ENCODE measurements at regions of chr21 and their contacts with region 1.

Region 1: DNA sequence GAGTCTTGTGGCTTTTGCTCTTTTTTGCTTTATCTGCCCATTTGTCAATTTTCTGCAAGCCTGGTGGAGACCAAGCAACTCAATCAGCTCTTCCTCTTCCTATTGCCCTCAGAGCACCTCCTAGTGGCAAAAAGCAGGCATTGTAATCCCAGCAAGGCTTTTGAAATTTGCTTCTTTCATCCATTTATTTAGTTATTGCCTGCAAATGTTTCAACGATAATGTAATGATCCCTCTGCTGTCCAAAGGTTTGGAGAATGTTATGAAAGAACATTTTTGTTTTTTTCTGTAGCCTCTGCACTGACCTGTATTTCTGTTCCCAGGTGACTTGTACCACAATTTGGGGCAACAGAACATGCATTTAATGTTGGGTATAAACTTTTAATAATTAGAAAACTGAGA is 127.8 kb downstream of the GABPA start:
- DNase-seq: peak; percentile 69
- H3K4me3 Mint-ChIP-seq: no peak overlapping the region
- H3K27ac Mint-ChIP-seq: no peak overlapping the region
- H3K4me1 Mint-ChIP-seq: peaks cover 2% of the 10 kb centered on the region
- H3K27me3 Mint-ChIP-seq: peaks cover 18% of the 10 kb centered on the region

Region 2: GRCh38 chr21:25788677-25789076 is 73.9 kb before region 1 on chr21:
- intact Hi-C with region 1: loop called (anchors 5 kb)
- DNase-seq: no peak
- H3K4me3 Mint-ChIP-seq: no peak overlapping the region
- H3K27ac Mint-ChIP-seq: no peak overlapping the region
- H3K4me1 Mint-ChIP-seq: peaks cover 8% of the 10 kb centered on the region
- H3K27me3 Mint-ChIP-seq: peaks cover 14% of the 10 kb centered on the region